H1 (cell line): ENCODE measurements at regions of chr3 and their contacts with region 1.

Region 1: GRCh38 chr3:123642182-123642956 is 57.5 kb upstream of the HACD2 start:
- DNase-seq: peak; percentile 89 to 93
- H3K4me3 ChIP-seq: no peak overlapping the region
- H3K27ac ChIP-seq: no peak overlapping the region
- H3K4me1 ChIP-seq: peaks cover 0 to 6% (median 2%) of the 10 kb centered on the region in 4 experiments; a peak in 4 of 7 replicates
- H3K27me3 ChIP-seq: no peaks in the 10 kb centered on the region
- CTCF ChIP-seq: peak; percentile 62 to 98 (median 97)
- EP300 ChIP-seq: 0 out of 3 replicates have a peak, but pooled peaks of 1 of the 2 experiments have one; percentile 35
- POLR2A ChIP-seq: no peak
- RAD21 ChIP-seq: peak; percentile 76 to 79

Region 2: DNA sequence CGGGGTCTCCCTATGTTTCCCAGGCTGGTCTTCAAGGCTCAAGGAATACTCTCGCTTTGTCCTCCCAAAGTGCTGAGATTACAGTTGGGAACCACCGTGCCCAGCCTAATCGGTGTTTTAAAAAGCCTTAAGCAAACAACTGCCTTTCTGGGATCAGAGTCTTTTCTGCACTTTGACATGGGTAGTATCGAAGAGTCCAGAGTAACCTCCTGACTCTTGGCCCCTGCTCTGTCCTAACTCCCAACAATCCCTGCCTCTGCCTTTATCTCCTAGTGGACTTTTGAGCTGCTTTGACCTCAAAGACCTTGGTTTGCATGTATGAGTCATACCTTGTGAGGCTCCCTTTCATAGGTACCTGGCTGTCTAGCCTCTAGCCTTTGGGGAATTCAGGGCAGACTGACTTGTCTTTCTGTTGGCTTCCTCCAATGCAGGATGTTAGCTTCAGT is 36.6 kb before region 1 on chr3:
- CTCF ChIA-PET with region 1: interaction called, 10 read pairs
- POLR2A ChIA-PET with region 1: no interaction called
- DNase-seq: no peak
- H3K4me3 ChIP-seq: no peak overlapping the region
- H3K27ac ChIP-seq: no peak overlapping the region
- H3K4me1 ChIP-seq: peaks cover 0 to 4% (median 3%) of the 10 kb centered on the region in 4 experiments; a peak in 3 of 7 replicates
- H3K27me3 ChIP-seq: no peaks in the 10 kb centered on the region
- CTCF ChIP-seq: no peak
- EP300 ChIP-seq: no peak
- POLR2A ChIP-seq: no peak
- RAD21 ChIP-seq: no peak

Region 3: DNA sequence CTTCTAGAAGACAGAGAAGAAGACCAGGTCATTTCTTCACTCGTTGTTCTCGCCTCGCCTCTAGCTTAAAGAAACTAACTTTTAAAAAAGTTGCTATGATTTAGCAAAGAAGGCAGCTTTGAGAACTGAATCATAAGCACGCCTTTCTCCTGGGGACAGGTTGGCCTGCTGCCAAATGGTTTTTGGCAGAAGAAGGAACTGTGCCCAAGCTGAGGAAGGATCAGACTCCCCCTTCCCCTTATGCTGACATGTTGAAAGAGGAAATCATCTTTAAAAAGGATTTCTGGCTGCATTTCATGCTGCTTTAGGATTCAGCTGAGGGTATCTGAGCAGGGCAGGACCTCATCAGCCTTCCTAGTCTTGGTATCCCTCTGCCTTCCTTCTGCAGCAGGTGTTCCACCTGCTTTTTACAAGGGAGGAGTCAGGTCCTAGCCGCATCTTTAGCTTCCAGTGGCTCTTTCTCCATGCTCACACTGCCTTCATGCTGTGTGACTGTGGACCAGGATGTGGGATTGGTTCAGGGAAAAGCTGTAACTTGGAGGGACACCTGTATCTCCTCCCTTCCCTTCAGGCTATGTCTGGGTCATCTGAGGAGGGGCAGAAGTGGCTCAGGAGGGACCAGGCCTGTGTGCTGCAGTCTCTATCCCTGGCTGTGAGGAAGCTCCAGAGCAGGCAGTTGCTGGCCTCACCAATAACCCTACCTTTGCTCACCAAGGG is 23.4 kb before region 1 on chr3:
- CTCF ChIA-PET with region 1: interaction called, 46 read pairs
- POLR2A ChIA-PET with region 1: no interaction called
- DNase-seq: no peak
- H3K4me3 ChIP-seq: no peak overlapping the region
- H3K27ac ChIP-seq: no peak overlapping the region
- H3K4me1 ChIP-seq: 0 out of 7 replicates have a peak, but pooled peaks cover 0 to 4% (median 1%) of the 10 kb centered on the region in 4 experiments
- H3K27me3 ChIP-seq: no peaks in the 10 kb centered on the region
- CTCF ChIP-seq: no peak
- EP300 ChIP-seq: no peak
- POLR2A ChIP-seq: no peak
- RAD21 ChIP-seq: no peak

Region 4: GRCh38 chr3:123632161-123632655 is 10.2 kb before region 1 on chr3:
- CTCF ChIA-PET with region 1: interaction called, 50 read pairs
- POLR2A ChIA-PET with region 1: interaction called, 3 read pairs
- DNase-seq: no peak
- H3K4me3 ChIP-seq: no peak overlapping the region
- H3K27ac ChIP-seq: no peak overlapping the region
- H3K4me1 ChIP-seq: peaks cover 3 to 25% (median 15%) of the 10 kb centered on the region in 4 experiments
- H3K27me3 ChIP-seq: no peaks in the 10 kb centered on the region
- CTCF ChIP-seq: no peak
- EP300 ChIP-seq: no peak
- POLR2A ChIP-seq: 0 out of 3 replicates have a peak, but pooled peaks of 1 of the 2 experiments have one; percentile 40
- RAD21 ChIP-seq: no peak

Region 5: GRCh38 chr3:123652346-123652984 is 10.1 kb after region 1 on chr3:
- CTCF ChIA-PET with region 1: interaction called, 355 read pairs
- POLR2A ChIA-PET with region 1: interaction called, 7 read pairs
- DNase-seq: peak; percentile 44 to 92
- H3K4me3 ChIP-seq: no peak overlapping the region
- H3K27ac ChIP-seq: no peak overlapping the region
- H3K4me1 ChIP-seq: peaks cover 0 to 10% (median 1%) of the 10 kb centered on the region in 4 experiments; a peak in 3 of 7 replicates
- H3K27me3 ChIP-seq: no peaks in the 10 kb centered on the region
- CTCF ChIP-seq: peak; percentile 93 to 98 (median 93)
- EP300 ChIP-seq: no peak
- POLR2A ChIP-seq: no peak
- RAD21 ChIP-seq: peak; percentile 98 to 100

Region 6: DNA sequence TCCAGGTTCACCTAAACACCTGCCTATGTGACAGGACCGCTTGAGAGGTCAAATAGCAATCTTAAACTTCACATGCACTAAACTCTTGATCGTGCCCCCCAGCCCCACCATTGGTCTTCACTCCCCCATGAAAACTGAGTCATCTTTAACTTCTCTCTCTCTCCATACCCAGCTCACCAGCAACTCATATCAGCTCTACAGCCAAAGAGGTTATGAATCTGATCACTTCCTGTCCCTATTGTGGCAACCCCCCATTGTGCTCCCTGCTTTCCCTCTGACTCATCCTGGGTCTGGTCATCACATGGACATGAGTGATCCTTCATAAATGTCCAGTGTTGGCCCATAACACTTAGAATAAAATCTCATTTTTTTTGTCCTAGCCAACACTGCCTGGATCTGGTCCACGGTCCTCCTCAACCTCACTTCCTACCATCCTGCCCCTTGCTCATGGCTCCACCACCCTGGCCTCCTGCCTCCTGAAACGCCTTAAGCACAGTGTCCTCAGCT is 45.9 kb after region 1 on chr3:
- CTCF ChIA-PET with region 1: interaction called, 1,463 read pairs
- POLR2A ChIA-PET with region 1: no interaction called
- DNase-seq: no peak
- H3K4me3 ChIP-seq: no peak overlapping the region
- H3K27ac ChIP-seq: no peak overlapping the region
- H3K4me1 ChIP-seq: peaks cover 0 to 2% (median under 1%) of the 10 kb centered on the region in 4 experiments; a peak in 2 of 7 replicates
- H3K27me3 ChIP-seq: no peaks in the 10 kb centered on the region; a peak in 1 of 7 replicates
- CTCF ChIP-seq: no peak
- EP300 ChIP-seq: no peak
- POLR2A ChIP-seq: no peak
- RAD21 ChIP-seq: no peak